RWPE1 (cell line): ENCODE measurements at regions of chr10 and their contacts with region 1.

Region 1: DNA sequence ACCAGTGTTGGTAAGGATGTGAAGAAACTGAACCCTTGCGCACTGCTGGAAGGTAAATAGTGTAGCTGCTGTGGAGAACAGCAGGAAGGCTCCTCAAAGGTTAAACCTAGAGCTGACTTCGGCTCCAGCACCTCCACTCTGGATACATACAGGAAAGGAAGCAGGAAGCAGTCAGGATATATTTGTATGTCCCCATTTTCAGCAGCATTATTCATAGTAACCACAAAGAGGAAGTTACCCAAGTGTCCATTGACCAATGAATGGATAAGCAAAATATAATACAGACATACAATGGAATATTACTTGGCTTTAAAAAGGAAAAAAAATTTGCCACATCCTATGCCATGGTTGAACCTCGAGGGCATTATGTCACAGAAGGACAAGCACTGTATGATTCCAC is 15.0 kb downstream of the RET start:
- DNase-seq: no peak
- H3K27ac ChIP-seq: no peak overlapping the region
- CTCF ChIP-seq: no peak

Region 2: DNA sequence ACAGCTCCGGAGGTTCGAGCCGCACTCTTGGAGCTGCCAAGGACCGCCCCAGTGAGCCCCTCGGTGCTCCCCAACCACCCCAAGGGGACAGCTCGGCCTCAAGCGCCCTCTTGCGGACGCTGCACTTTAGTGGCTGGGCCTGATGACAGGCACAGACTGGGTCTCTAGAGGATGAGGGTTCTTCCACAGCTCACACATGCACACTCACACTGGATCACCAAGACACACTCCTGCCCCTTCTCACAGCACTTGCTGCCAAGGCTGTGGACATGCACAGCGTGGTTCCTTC is 12.9 kb before region 1 on chr10:
- CTCF ChIA-PET with region 1: no interaction called
- POLR2A ChIA-PET with region 1: no interaction called
- DNase-seq: peak; percentile 43
- H3K27ac ChIP-seq: no peak overlapping the region
- CTCF ChIP-seq: peak; percentile 61

Region 3: DNA sequence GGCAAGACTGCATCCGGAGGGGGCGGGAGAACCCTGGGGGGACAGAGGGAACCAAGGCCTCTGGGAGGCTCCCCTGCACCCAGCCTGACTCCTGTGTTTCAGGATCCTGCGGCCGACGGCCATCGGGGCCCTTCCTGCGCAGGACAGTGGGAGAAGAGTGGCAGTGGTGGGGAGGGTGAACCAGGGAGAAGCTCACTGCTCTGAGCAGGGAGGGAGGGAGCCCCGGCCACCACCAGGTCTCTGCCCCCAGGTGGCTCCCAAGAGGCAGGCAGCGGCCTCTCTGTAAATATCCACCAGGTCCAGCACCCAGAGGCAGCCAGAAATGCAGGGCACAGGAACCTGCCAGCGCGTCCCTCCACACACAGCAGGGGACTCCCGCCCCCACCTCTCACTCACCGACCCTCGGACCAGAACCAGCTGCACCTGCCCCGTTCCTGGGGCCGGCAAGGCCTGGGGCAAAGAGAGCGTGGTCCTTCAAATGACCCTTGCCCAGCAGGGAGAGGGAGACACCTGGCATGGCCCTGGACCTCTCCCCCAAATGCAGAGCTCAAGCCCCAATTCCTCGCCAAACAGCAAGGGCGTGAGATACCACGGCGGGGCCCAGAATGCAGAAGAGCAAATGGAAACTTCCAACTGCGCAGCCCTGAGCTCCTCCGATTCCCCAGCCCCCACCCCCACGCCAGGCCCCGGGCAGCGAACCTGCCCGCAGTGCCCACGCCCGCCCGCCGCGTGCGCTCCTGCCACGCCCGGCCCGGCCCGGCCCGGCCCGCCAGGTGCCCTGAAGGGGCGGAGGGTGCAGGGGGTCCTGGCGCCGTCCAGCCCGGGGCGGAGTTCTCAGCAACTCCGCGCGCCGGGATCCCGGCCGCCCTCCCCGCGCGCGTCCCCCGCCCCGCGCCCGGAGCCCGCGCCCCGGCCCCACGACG is 174.2 kb after region 1 on chr10:
- CTCF ChIA-PET with region 1: no interaction called
- POLR2A ChIA-PET with region 1: interaction called, 11 read pairs
- DNase-seq: peak; percentile 53
- H3K27ac ChIP-seq: no peak overlapping the region
- CTCF ChIP-seq: no peak

Region 4: GRCh38 chr10:43390759-43391158 is 298.9 kb after region 1 on chr10:
- CTCF ChIA-PET with region 1: no interaction called
- POLR2A ChIA-PET with region 1: no interaction called
- DNase-seq: no peak
- H3K27ac ChIP-seq: peak overlapping the region; percentile 59
- CTCF ChIP-seq: no peak; the same call in 1 of the 2 replicates